Colonic mucosa (tissue), 4 donors: ENCODE measurements at regions of chr19 and their contacts with region 1.

Region 1: GRCh38 chr19:19145684-19146608 is 7.7 kb upstream of the TMEM161A start:
- DNase-seq: peak; percentile 88
- H3K4me3 ChIP-seq: no peak overlapping the region
- H3K27ac ChIP-seq: no peak overlapping the region
- H3K4me1 ChIP-seq: no peaks in the 10 kb centered on the region
- H3K27me3 ChIP-seq: no peaks in the 10 kb centered on the region
- CTCF ChIP-seq: peak; percentile 83

Region 2: DNA sequence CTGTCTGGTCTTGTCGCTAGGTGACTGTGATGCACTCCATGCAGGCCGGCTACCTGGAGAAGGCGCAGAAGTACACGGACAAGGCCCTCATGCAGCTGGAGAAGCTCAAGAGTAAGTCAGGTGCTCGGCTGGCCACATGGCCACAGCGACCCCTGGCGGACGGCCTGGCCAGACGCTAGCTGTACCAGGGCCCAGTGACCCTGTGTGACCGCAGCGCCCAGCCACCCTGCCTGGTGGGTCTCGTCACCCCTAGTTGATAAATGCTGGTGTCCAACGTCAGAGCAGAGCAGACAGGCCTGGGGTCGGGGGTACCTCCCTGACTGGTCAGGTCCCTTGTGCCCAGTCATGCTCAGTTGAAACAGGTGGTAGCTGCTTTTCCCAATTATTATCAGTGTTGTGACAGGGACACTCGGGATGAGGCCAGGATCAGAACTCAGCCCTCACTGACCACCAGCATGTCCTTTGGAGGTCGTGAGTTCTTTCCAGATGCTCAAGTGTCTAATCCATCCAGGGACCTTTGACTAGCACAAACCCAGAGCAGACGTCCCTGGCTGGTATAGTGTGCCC is 196.9 kb after region 1 on chr19:
- intact Hi-C with region 1: loop called (anchors 5 kb)
- DNase-seq: peak; percentile 68
- H3K4me3 ChIP-seq: no peak overlapping the region
- H3K27ac ChIP-seq: no peak overlapping the region
- H3K4me1 ChIP-seq: no peaks in the 10 kb centered on the region
- H3K27me3 ChIP-seq: no peaks in the 10 kb centered on the region
- CTCF ChIP-seq: peak; percentile 86